MCF 10A (cell line): ENCODE measurements at regions of chr5 and their contacts with region 1.

Region 1: DNA sequence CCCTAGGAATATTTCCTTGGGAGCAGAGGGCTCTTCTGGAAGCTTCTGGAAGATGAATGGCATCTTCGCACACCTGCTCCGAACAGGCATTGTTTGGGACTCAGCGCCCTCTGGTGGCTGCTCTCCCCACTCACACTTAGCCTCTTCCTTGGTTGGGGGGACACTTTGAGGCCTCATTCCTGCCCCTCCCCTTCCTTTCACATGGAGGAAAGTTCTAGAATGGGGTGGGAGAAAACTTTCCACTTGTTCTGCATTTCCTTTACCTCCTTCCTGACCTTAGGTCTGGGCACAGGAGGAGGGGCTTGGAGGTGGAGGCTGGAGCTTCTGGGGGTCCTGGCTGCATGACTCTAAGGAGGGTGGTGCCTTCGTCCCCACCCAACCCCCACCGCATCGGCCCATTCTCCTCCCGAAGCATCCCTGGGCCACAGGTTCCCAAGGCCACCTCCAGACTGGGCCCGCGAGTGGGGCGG is 19.3 kb upstream of the SMIM32 start:
- DNase-seq: peak; percentile 73
- H3K4me3 Mint-ChIP-seq: no peak overlapping the region
- H3K27ac Mint-ChIP-seq: no peak overlapping the region
- H3K4me1 Mint-ChIP-seq: peaks cover 5% of the 10 kb centered on the region
- H3K27me3 Mint-ChIP-seq: peaks cover 13% of the 10 kb centered on the region
- CTCF ChIP-seq: peak; percentile 96

Region 2: DNA sequence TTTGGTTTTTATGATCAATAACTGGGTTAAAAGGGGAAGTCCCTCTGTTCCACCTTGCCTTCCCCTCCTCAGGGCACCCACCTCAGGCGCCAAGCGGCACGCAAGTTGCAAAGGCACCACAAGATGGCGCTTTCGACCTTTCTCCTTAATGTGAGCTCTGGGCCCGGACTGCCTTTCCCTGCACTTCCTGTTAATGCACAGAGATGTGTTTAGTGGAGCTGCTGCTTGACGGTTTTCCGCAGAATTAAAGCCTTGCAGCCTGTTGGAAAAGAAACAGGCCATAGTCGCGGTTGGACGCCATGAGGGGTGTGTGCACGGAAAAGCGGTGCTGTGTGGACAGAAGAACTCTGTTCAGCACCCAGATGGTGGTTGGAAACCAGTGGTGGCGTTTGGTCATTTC is 651.4 kb before region 1 on chr5:
- CTCF ChIA-PET with region 1: interaction called, 17 read pairs
- POLR2A ChIA-PET with region 1: no interaction called
- intact Hi-C with region 1: loop called (anchors 1 kb)
- DNase-seq: peak; percentile 91
- H3K4me3 Mint-ChIP-seq: no peak overlapping the region
- H3K27ac Mint-ChIP-seq: no peak overlapping the region
- H3K4me1 Mint-ChIP-seq: peaks cover 6% of the 10 kb centered on the region
- H3K27me3 Mint-ChIP-seq: peaks cover 37% of the 10 kb centered on the region
- CTCF ChIP-seq: peak; percentile 94

Region 3: GRCh38 chr5:135887351-135887864 is 324.9 kb before region 1 on chr5:
- CTCF ChIA-PET with region 1: interaction called, 53 read pairs
- POLR2A ChIA-PET with region 1: interaction called, 5 read pairs
- intact Hi-C with region 1: loop called (anchors 1 kb)
- DNase-seq: peak; percentile 90
- H3K4me3 Mint-ChIP-seq: no peak overlapping the region
- H3K27ac Mint-ChIP-seq: no peak overlapping the region
- H3K4me1 Mint-ChIP-seq: no peaks in the 10 kb centered on the region
- H3K27me3 Mint-ChIP-seq: peaks cover 37% of the 10 kb centered on the region
- CTCF ChIP-seq: peak; percentile 96

Region 4: GRCh38 chr5:135921388-135921787 is 290.9 kb before region 1 on chr5:
- CTCF ChIA-PET with region 1: interaction called, 10 read pairs
- POLR2A ChIA-PET with region 1: no interaction called
- intact Hi-C with region 1: no loop called
- DNase-seq: peak; percentile 72
- H3K4me3 Mint-ChIP-seq: no peak overlapping the region
- H3K27ac Mint-ChIP-seq: no peak overlapping the region
- H3K4me1 Mint-ChIP-seq: no peaks in the 10 kb centered on the region
- H3K27me3 Mint-ChIP-seq: peaks cover 84% of the 10 kb centered on the region
- CTCF ChIP-seq: no peak

Region 5: DNA sequence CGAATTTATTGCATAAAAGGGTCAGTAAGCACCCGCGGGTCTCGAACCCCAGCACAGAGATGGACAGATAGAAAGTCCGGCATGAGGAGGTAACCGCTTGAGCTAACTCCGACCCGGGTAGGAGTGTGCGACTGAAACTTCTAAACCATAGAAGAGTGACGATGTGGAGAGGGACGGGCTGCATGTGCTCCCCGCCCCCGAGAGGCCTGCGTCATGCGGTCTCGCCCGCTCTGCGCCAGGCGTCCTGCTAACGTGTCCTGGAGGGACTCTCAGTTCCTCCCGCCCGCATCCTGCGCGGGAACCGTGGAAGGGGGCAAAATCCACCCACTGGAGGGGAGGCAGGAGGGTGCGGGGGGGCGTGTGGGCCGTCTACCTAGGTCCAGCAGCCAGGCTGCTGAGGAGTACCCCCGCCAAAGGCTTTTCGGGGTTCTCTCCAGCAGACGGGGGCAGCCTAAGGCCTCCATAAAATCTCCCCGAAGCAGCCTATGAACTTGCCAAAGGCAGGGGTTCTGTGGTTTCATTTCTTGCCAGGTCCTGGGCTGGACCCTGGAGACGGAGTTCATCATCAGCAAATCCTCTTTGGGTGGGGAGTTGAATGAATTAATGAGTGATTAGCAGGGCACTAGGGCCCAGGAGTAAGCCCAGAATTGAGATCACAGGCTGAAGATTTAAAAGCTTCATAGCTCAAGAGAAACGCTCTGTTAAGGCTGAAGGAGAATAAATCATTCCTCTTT is 131.6 kb before region 1 on chr5:
- CTCF ChIA-PET with region 1: interaction called, 28 read pairs
- POLR2A ChIA-PET with region 1: no interaction called
- intact Hi-C with region 1: loop called (anchors 1 kb)
- DNase-seq: no peak
- H3K4me3 Mint-ChIP-seq: no peak overlapping the region
- H3K27ac Mint-ChIP-seq: no peak overlapping the region
- H3K4me1 Mint-ChIP-seq: no peaks in the 10 kb centered on the region
- H3K27me3 Mint-ChIP-seq: no peaks in the 10 kb centered on the region
- CTCF ChIP-seq: no peak

Region 6: GRCh38 chr5:136188859-136189258 is 23.4 kb before region 1 on chr5:
- CTCF ChIA-PET with region 1: interaction called, 20 read pairs
- POLR2A ChIA-PET with region 1: interaction called, 3 read pairs
- intact Hi-C with region 1: no loop called
- DNase-seq: no peak
- H3K4me3 Mint-ChIP-seq: no peak overlapping the region
- H3K27ac Mint-ChIP-seq: no peak overlapping the region
- H3K4me1 Mint-ChIP-seq: no peaks in the 10 kb centered on the region
- H3K27me3 Mint-ChIP-seq: peaks cover 29% of the 10 kb centered on the region
- CTCF ChIP-seq: no peak

Region 7: DNA sequence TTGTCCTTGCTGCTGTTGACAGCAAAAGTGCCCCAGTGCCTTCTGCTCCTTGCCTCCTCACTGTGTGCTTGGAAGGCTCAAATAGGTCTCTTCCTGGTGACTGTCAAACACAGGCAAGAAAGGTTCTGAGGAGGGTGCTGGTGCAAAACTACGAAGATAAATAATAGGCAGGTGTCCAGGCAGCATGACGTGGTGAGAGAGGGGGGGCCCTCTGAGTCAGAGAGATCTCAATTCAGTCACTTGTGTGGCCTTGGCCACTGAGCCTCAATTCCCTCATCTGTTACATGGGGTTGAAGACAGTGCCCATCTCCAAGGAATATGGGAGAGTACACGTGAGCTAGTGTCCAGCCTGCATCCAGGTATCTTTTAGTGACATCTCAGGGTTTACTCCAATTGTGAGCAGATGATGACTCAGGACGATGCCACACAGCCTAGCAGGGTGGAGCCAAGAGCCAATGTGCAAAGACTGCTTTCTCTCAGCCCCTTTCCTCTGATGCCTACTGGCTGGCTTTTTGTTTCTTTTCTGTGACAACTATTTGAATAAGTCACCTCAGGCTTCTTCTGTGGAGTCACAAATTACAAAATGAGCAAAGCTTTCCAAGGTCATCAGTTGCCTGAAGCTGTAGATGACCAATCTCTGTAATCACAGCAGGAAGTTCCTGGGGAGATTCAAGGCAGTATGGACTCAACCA is 10.4 kb after region 1 on chr5:
- CTCF ChIA-PET with region 1: interaction called, 78 read pairs
- POLR2A ChIA-PET with region 1: no interaction called
- intact Hi-C with region 1: no loop called
- DNase-seq: peak; percentile 43
- H3K4me3 Mint-ChIP-seq: no peak overlapping the region
- H3K27ac Mint-ChIP-seq: no peak overlapping the region
- H3K4me1 Mint-ChIP-seq: peaks cover 6% of the 10 kb centered on the region
- H3K27me3 Mint-ChIP-seq: peaks cover 30% of the 10 kb centered on the region
- CTCF ChIP-seq: no peak